ENCODE measurements at regions of chr2 and their contacts with region 1.

Region 1: DNA sequence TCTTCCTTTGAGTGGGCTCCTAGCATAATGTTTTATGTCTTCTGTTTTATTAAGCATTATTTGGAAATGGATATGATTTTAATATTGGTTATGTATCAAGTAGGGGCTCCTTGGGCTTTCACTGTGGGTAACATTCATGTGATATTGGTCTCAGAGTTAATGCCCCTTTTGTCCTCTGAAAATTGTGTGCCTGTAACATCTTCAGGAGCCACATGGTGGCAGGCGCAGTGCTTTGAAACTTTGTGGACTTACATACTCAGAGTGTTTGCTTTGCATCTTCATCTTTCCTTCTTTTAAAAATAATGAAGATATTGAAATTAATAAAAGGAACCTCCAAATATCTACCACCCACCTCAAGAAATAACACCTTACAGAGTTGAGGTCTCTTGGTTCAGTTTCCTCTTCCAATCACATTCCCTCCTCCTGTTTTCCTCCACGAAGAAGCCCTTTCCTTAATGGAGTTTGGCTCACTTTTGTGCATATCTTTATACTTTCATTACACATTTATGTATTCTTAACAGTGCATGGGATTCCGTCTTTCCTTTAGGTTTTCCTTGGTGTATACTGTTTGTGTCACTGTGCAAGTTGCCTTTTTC is 73.5 kb downstream of the LIMS1 start:
- DNase-seq: peak; percentile 42
- CTCF ChIP-seq: peak; percentile 80

Region 2: DNA sequence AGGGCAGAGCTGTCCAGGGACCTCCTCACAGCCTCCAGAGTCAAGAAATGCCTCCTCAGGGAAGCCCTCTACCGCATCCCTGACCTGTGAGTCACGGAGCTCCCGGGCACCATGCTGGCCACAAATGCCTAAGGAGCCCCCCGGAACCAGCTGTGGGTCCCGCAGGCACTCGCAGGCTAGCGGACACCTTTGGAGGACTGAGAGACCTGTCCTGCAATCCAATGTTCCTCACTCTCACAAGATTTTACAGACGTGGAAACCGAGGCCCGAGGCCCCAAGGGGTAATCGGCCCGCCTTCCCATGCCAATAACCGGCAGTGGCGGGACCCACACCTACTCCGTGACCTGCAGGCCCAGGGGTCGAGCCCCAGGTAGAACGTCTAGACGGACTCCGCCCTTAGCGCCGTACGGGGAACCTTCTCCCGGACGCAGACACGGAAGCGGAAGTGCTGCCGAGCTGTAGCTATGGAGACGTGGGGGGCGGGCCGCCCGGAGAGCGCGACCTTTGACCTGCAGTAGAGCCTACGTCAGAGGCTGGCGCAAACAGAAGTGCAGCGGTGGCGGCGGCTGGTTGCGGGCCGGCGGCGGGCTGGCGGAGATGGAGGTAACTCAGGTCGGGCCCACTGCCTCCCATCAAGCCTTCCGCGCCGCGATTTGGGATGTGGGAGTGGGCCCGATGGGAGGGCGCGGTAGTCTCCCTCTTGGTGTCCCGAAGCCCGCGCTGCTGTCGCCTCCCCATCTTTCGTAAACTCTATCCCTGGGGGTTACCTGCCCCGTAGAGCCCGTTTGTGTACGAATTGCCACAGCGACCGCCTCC is 158.9 kb before region 1 on chr2 and contains the start of gene GCC2:
- CTCF ChIA-PET with region 1: no interaction called
- POLR2A ChIA-PET with region 1: no interaction called
- DNase-seq: peak; percentile 94
- CTCF ChIP-seq: no peak

Region 3: DNA sequence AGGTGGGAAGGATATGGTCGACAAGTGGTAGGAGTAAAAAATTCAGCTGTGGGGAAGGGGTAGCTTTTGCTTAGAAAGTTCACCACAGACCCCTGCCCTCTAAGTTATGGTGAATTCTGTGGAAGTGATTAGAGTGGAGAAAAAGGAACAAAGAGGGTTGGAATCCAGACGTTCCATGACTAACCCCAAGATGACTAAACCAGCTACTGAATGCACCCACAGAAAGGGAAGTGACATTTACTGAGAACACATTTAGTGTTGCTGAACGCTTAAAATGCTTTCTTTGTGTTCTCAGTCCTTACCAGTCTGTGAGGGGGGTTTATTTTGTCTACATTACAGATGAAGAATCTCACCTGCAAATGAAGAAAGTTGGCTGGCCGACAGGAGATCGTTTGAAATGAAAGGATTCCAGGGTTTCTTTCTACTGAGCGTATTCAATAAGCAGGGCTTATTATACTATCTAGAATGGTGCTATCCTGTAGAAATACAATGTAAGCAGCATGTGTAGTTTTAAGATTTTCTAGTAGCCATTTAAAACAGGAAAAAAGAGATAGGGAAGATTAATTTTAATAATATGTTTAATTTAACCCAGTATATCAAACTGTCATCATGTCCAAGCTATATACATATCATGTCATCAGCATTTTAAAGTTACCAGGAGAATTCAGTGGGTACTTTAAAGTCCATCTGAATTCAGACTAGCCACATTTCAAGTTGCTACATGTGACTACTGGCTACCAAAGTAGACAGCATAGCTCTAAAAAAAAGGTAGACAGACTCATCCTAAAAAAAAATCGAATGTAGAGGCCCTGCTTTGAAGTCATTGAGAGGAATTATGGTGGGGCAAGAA is 13.4 kb before region 1 on chr2:
- CTCF ChIA-PET with region 1: interaction called, 16 read pairs
- POLR2A ChIA-PET with region 1: interaction called, 7 read pairs
- DNase-seq: peak; percentile 49
- CTCF ChIP-seq: no peak

Region 4: DNA sequence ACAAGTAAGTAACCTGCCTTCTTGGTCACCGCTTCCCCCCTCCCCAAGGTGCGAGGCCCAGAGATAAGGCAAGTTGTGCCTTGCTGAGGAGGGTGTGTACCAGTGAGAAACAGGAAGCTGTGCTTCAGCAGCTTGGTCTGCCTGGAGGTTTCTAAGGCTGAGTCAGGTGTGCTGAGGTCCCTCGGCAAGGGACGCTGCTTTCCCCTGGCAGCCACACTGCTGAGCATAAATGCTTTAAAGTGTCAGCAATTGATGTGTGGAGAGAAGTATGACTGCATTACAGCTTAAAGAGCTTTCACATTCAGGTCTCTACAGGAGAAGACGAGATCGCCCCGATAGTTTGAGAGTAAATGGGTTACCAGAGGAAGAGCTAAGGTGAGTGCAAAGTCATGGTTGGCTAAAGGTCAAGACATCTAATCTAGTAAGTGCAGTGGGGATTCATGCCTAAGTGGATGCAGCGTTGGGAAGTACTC is 13.3 kb after region 1 on chr2:
- CTCF ChIA-PET with region 1: interaction called, 27 read pairs
- POLR2A ChIA-PET with region 1: no interaction called
- DNase-seq: peak; percentile 74
- CTCF ChIP-seq: peak; percentile 2